CD4-positive, alpha-beta T cell (primary cell): ENCODE measurements at regions of chr7 and their contacts with region 1.

Region 1: DNA sequence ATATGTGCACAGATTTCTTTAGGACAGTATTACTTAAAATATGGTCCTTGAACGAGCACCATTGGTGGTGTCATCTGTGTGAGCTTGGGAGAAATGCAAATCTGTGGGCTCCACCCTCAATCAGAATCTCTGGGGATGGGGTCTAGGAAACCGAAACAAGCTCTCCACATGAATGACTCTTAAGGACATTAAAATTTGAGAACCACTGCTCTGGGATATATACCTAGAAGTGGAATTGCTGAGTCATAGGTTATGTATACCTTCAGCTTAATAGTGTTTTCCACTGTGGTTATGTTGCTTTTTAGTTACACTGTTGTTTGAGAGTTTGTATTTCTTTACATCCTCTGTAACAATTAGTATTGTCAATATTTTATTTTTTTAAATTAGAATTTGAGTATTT is 24.0 kb downstream of the ZNRF2 start:
- DNase-seq: peak in 1 of 14 experiments; percentile 20
- ATAC-seq: no peak
- H3K4me3 ChIP-seq: no peak overlapping the region
- H3K4me3 Mint-ChIP-seq: no peak overlapping the region
- H3K27ac ChIP-seq: no peak overlapping the region
- H3K27ac Mint-ChIP-seq: no peak overlapping the region
- H3K4me1 ChIP-seq: peaks cover 6% of the 10 kb centered on the region
- H3K4me1 Mint-ChIP-seq: peaks cover 80% of the 10 kb centered on the region
- H3K27me3 ChIP-seq: no peaks in the 10 kb centered on the region
- H3K27me3 Mint-ChIP-seq: no peaks in the 10 kb centered on the region
- CTCF ChIP-seq: no peak

Region 2: DNA sequence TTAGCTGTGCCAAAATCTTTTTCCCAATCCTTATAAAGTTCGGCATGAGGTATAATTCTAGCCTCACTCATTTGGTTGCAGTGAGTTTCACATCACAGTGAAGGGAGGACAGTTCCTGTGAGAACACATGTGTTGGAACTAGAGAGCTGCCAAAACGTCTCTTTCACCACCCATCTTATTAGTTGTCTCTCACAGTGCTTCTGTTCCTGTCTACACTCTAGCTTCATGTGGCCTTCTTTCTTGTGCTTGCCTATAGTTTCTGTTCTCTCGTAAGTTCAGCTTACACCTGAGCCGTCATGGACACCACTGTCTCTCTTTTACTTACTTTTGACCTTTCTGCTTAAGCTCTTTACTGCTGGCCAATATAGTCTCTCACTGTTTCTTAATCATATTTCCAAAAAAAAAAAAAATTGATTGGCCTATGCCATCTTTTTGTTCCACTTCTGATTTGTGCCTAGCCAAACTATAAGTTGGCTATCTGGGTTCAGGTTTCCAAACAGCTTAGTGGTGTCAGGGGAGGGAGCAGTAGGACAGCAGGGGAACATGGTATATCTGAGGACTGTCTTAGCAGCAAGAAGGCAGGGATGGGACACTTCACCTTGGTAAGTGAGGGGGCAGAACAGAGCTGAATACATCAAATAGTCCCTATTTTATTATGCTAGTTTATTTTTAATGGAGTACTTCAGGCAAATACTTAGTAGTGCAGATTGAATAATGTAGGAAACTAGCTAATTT is 14.0 kb after region 1 on chr7:
- CTCF ChIA-PET with region 1: interaction called, 13 read pairs
- POLR2A ChIA-PET with region 1: interaction called, 3 read pairs
- intact Hi-C with region 1: loop called in 1 of 2 experiments (anchors 2 kb)
- DNase-seq: peak in 5 of 14 experiments; percentile 7 to 71 (median 59)
- ATAC-seq: peak; percentile 78
- H3K4me3 ChIP-seq: peak overlapping the region; percentile 36
- H3K4me3 Mint-ChIP-seq: peak overlapping the region; percentile 88
- H3K27ac ChIP-seq: peak overlapping the region; percentile 70 to 79
- H3K27ac Mint-ChIP-seq: peak overlapping the region; percentile 90
- H3K4me1 ChIP-seq: peaks cover 10% of the 10 kb centered on the region
- H3K4me1 Mint-ChIP-seq: peaks cover 83% of the 10 kb centered on the region
- H3K27me3 ChIP-seq: no peaks in the 10 kb centered on the region
- H3K27me3 Mint-ChIP-seq: no peaks in the 10 kb centered on the region
- CTCF ChIP-seq: no peak

Region 3: GRCh38 chr7:30335763-30336487 is 27.5 kb after region 1 on chr7:
- CTCF ChIA-PET with region 1: interaction called, 6 read pairs
- POLR2A ChIA-PET with region 1: no interaction called
- intact Hi-C with region 1: loop called in 1 of 2 experiments (anchors 5 kb)
- DNase-seq: no peak
- ATAC-seq: no peak
- H3K4me3 ChIP-seq: no peak overlapping the region
- H3K4me3 Mint-ChIP-seq: no peak overlapping the region
- H3K27ac ChIP-seq: no peak overlapping the region
- H3K27ac Mint-ChIP-seq: no peak overlapping the region
- H3K4me1 ChIP-seq: no peaks in the 10 kb centered on the region
- H3K4me1 Mint-ChIP-seq: peaks cover 70% of the 10 kb centered on the region
- H3K27me3 ChIP-seq: no peaks in the 10 kb centered on the region
- H3K27me3 Mint-ChIP-seq: no peaks in the 10 kb centered on the region
- CTCF ChIP-seq: no peak

Region 4: DNA sequence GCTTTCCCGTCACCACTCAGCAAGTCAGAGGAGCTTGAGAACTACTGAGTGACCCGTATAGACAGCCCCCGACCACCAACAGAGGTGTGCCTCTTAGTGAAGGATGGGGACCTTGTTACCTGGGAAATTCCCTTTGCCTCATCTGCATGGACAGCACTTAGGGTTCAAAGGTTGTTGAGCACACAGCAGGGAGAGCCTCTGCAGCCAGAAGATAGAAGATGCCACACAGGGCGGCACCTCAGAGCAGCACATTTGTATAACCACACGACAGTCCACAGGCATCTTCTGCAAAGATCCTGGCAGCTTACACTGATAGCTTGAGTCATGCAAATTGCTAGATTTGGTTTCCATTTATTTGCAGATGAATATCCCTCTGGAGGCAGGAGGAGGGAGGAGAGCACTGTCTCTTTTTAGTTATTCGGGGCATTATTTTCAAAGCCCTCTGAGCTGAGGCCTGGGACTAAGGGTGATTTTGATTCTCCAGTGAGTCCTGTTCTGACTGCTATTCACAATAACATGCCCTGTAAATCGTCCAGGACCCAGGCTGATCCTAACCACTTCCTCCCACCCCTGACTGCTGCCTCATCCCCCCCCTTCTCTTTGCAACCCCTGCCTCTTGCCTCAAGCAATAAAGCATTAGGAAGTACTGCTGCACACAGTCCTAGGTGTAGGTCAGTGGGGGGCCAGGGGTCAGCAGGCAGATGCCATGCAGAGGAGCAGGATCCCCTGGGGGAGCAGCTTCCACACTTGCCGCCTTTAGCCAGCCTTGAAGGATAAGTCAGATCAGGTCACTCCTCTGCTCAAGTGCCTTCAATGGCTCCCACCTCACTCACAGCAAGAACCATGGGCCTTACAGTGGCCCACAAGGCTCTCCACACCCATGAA is 418.9 kb after region 1 on chr7:
- CTCF ChIA-PET with region 1: no interaction called
- POLR2A ChIA-PET with region 1: no interaction called
- intact Hi-C with region 1: no loop called
- DNase-seq: peak; percentile 26 to 93 (median 56)
- ATAC-seq: peak; percentile 93
- H3K4me3 ChIP-seq: peak overlapping the region; percentile 62
- H3K4me3 Mint-ChIP-seq: peak overlapping the region; percentile 78
- H3K27ac ChIP-seq: peak overlapping the region; percentile 47 to 71
- H3K27ac Mint-ChIP-seq: peak overlapping the region; percentile 85
- H3K4me1 ChIP-seq: peaks cover 61% of the 10 kb centered on the region
- H3K4me1 Mint-ChIP-seq: peaks cover 75% of the 10 kb centered on the region
- H3K27me3 ChIP-seq: no peaks in the 10 kb centered on the region
- H3K27me3 Mint-ChIP-seq: no peaks in the 10 kb centered on the region
- CTCF ChIP-seq: no peak